ENCODE measurements at regions of chr2 and their contacts with region 1.

Region 1: GRCh38 chr2:121649596-121650314 is 493 bp upstream of the CLASP1 start:
- DNase-seq: peak; percentile 97
- ATAC-seq: peak; percentile 93
- H3K4me3 Mint-ChIP-seq: peak overlapping the region; percentile 91
- H3K27ac Mint-ChIP-seq: peak overlapping the region; percentile 99
- H3K4me1 Mint-ChIP-seq: peaks cover 64% of the 10 kb centered on the region
- H3K27me3 Mint-ChIP-seq: no peaks in the 10 kb centered on the region

Region 2: DNA sequence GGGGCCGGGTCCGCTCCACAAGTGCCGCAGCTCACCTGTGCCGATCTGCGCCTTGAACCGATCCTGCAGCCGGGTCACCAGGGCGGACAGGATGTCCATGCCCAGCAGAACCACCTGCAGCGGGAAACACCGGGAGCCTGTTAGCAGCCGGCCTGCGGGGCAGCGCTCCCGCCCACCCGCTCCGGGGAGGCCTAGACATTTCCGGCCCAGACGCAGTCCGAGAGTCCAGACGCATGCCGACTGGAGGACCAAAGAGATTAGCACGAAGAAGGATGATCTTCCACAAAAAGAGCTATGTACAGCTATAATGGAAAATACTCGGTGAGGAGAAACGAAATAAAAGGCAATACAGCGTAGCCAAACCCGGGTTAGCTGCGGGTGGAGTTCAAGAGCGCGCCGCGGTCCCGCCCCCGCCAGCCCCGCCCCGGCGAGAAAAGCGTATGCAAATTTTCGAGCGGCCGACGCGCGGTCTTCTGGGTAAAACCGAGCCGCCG is 119.5 kb before region 1 on chr2:
- CTCF ChIA-PET with region 1: interaction called, 33 read pairs
- DNase-seq: no peak
- ATAC-seq: peak; percentile 71
- H3K4me3 Mint-ChIP-seq: peak overlapping the region; percentile 82
- H3K27ac Mint-ChIP-seq: peak overlapping the region; percentile 96
- H3K4me1 Mint-ChIP-seq: peaks cover 54% of the 10 kb centered on the region
- H3K27me3 Mint-ChIP-seq: no peaks in the 10 kb centered on the region

Region 3: DNA sequence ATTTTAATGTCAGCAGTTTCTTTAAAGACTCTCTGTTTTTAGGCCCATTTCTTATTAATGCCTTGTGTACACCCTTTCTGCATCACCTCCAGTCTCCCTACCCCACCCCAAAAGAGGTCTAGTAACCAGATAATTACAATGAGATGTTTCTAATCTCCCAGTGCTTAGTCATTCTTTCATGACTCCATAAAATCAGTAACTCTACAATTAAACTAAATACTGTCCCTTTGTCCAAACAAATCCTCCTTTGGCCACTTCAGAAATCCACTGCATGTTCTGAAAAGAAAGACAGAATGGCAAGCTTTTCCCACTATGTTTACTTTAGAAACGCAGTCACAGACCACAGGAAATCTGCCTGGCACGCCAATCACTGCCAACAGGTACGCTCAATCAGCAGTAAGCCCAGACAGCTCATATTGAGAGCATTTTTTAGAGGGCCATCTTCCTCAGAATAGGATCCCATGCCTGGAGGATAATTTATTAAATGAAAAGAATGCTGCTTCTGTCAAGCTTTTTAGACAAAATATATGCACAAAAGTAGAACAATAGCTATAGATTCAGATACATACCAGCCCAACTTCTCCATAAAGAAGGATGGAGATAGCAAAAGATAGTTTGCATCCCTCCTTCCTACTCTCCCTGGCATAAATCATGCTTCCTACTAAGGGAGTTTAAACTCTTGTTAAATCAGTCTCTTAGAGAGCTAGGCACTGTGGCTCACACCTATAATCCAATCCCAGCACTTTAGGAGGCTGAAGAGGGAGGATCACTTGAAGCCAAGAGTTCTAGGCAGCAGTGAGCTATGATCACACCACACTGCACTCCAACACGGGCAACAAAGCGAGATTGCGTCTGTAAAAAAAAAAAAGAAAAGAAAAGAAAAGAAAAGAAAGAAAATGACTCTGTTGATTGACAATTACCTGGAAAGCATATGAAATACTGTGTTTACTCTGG is 15.1 kb before region 1 on chr2:
- CTCF ChIA-PET with region 1: interaction called, 10 read pairs
- DNase-seq: no peak
- ATAC-seq: peak; percentile 51
- H3K4me3 Mint-ChIP-seq: no peak overlapping the region
- H3K27ac Mint-ChIP-seq: peak overlapping the region; percentile 29
- H3K4me1 Mint-ChIP-seq: peaks cover 25% of the 10 kb centered on the region
- H3K27me3 Mint-ChIP-seq: no peaks in the 10 kb centered on the region

Region 4: GRCh38 chr2:121662651-121663050 is 12.9 kb after region 1 on chr2:
- CTCF ChIA-PET with region 1: no interaction called
- DNase-seq: no peak
- ATAC-seq: no peak
- H3K4me3 Mint-ChIP-seq: no peak overlapping the region
- H3K27ac Mint-ChIP-seq: no peak overlapping the region
- H3K4me1 Mint-ChIP-seq: no peaks in the 10 kb centered on the region
- H3K27me3 Mint-ChIP-seq: no peaks in the 10 kb centered on the region

Region 5: GRCh38 chr2:121699421-121700333 is 49.9 kb after region 1 on chr2:
- CTCF ChIA-PET with region 1: interaction called, 23 read pairs
- DNase-seq: peak; percentile 98
- ATAC-seq: peak; percentile 94
- H3K4me3 Mint-ChIP-seq: peak overlapping the region; percentile 75
- H3K27ac Mint-ChIP-seq: peak overlapping the region; percentile 99
- H3K4me1 Mint-ChIP-seq: peaks cover 56% of the 10 kb centered on the region
- H3K27me3 Mint-ChIP-seq: no peaks in the 10 kb centered on the region

Region 6: DNA sequence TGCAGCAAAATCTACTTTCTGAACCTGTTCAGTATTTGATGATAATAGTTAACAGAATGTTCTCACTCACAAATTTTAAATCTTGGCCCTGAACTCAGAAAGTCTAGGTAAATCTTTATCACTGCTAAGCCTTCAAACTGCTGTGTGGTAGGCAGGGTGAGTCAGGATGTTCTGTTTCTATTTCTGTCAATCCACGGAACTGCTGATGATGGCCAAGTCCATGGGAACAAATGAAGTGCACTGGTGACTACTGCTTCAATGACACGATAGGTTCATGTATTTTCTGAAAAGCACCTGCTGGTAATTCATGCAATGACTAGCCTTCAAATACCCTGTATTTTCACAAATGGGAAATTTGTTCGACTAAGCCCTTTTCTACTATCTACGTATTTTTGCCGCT is 72.7 kb after region 1 on chr2:
- CTCF ChIA-PET with region 1: interaction called, 10 read pairs
- DNase-seq: no peak
- ATAC-seq: peak; percentile 72
- H3K4me3 Mint-ChIP-seq: no peak overlapping the region
- H3K27ac Mint-ChIP-seq: peak overlapping the region; percentile 61
- H3K4me1 Mint-ChIP-seq: peaks cover 21% of the 10 kb centered on the region
- H3K27me3 Mint-ChIP-seq: no peaks in the 10 kb centered on the region

Region 7: DNA sequence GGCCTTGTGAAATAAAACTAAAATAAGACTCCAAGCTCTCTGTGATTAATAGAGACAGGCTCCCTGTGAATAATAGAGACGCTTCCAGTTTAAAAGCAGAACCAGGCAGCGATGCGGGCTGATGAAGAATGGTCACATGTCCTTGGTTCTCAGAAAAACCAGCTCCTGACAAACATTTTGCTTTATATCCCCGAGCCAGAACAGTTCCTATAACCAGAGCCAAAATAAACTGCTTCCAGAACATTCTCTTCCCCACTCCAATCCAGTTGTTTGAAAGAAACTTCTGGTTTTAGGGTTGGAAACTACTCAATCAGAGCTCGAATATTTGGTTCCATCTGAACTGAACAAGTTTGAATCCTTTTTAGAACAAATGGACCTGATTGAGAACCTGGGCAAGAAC is 319.4 kb after region 1 on chr2:
- CTCF ChIA-PET with region 1: no interaction called
- DNase-seq: no peak
- ATAC-seq: no peak
- H3K4me3 Mint-ChIP-seq: no peak overlapping the region
- H3K27ac Mint-ChIP-seq: no peak overlapping the region
- H3K4me1 Mint-ChIP-seq: no peaks in the 10 kb centered on the region
- H3K27me3 Mint-ChIP-seq: peaks cover 16% of the 10 kb centered on the region